ENCODE measurements at regions of chr12 and their contacts with region 1.

Region 1: GRCh38 chr12:9741726-9742125 is 8.8 kb upstream of the CLECL1 start:
- DNase-seq: peak; percentile 92
- ATAC-seq: peak; percentile 79
- H3K4me3 Mint-ChIP-seq: peak overlapping the region; percentile 79
- H3K27ac Mint-ChIP-seq: peak overlapping the region; percentile 96
- H3K4me1 Mint-ChIP-seq: peaks cover 68% of the 10 kb centered on the region
- H3K27me3 Mint-ChIP-seq: no peaks in the 10 kb centered on the region

Region 2: DNA sequence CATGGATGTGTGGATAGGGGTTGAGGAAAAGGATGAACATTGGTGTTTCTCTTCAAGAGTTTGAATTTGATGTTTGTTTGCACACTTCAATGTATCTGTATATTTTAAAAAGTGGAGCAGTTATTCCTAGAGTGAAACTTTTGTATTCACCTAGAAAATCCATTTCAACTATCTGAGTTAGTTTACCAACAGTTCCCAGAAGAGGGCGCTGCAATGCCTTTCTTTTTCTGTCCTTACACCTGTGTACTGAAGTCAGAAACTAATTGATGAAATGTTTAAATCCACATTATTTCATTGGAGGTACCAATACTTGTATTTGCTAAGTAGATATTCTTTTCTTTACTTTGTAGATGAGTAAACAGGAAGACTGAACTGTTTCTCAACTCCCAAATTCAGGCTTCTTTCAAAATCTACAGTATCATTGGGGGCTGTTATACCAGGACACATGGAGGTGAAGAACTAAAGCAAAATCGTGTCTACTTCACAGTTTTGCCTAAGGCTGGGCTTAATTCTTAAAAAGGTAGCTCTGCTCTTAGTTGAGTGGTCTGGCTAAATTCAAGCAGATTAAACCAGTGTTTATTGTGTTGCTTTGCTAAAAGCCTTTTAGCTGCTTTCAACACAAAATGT is 107.4 kb before region 1 on chr12:
- CTCF ChIA-PET with region 1: interaction called, 22 read pairs
- POLR2A ChIA-PET with region 1: no interaction called
- DNase-seq: peak; percentile 91
- ATAC-seq: peak; percentile 88
- H3K4me3 Mint-ChIP-seq: no peak overlapping the region
- H3K27ac Mint-ChIP-seq: peak overlapping the region; percentile 62
- H3K4me1 Mint-ChIP-seq: peaks cover 62% of the 10 kb centered on the region
- H3K27me3 Mint-ChIP-seq: no peaks in the 10 kb centered on the region

Region 3: GRCh38 chr12:9673404-9674225 is 68.1 kb before region 1 on chr12:
- CTCF ChIA-PET with region 1: interaction called, 14 read pairs
- POLR2A ChIA-PET with region 1: interaction called, 24 read pairs
- DNase-seq: peak; percentile 81
- ATAC-seq: peak; percentile 29
- H3K4me3 Mint-ChIP-seq: peak overlapping the region; percentile 86
- H3K27ac Mint-ChIP-seq: peak overlapping the region; percentile 97
- H3K4me1 Mint-ChIP-seq: peaks cover 56% of the 10 kb centered on the region
- H3K27me3 Mint-ChIP-seq: no peaks in the 10 kb centered on the region

Region 4: GRCh38 chr12:9721394-9722092 is 20.2 kb before region 1 on chr12:
- CTCF ChIA-PET with region 1: interaction called, 10 read pairs
- POLR2A ChIA-PET with region 1: interaction called, 4 read pairs
- DNase-seq: no peak
- ATAC-seq: no peak
- H3K4me3 Mint-ChIP-seq: no peak overlapping the region
- H3K27ac Mint-ChIP-seq: no peak overlapping the region
- H3K4me1 Mint-ChIP-seq: peaks cover 26% of the 10 kb centered on the region
- H3K27me3 Mint-ChIP-seq: no peaks in the 10 kb centered on the region

Region 5: GRCh38 chr12:9776778-9777177 is 35.1 kb after region 1 on chr12:
- CTCF ChIA-PET with region 1: no interaction called
- POLR2A ChIA-PET with region 1: no interaction called
- DNase-seq: no peak
- ATAC-seq: no peak
- H3K4me3 Mint-ChIP-seq: no peak overlapping the region
- H3K27ac Mint-ChIP-seq: no peak overlapping the region
- H3K4me1 Mint-ChIP-seq: peaks cover 94% of the 10 kb centered on the region
- H3K27me3 Mint-ChIP-seq: no peaks in the 10 kb centered on the region

Region 6: GRCh38 chr12:9797722-9798619 is 56.2 kb after region 1 on chr12:
- CTCF ChIA-PET with region 1: interaction called, 855 read pairs
- POLR2A ChIA-PET with region 1: interaction called, 13 read pairs
- DNase-seq: peak; percentile 87
- ATAC-seq: peak; percentile 83
- H3K4me3 Mint-ChIP-seq: no peak overlapping the region
- H3K27ac Mint-ChIP-seq: peak overlapping the region; percentile 64
- H3K4me1 Mint-ChIP-seq: peaks cover 46% of the 10 kb centered on the region
- H3K27me3 Mint-ChIP-seq: peaks cover 4% of the 10 kb centered on the region

Region 7: GRCh38 chr12:9906873-9907272 is 165.1 kb after region 1 on chr12:
- CTCF ChIA-PET with region 1: interaction called, 13 read pairs
- POLR2A ChIA-PET with region 1: no interaction called
- DNase-seq: peak; percentile 70
- ATAC-seq: peak; percentile 97
- H3K4me3 Mint-ChIP-seq: peak overlapping the region; percentile 55
- H3K27ac Mint-ChIP-seq: peak overlapping the region; percentile 89
- H3K4me1 Mint-ChIP-seq: peaks cover 52% of the 10 kb centered on the region
- H3K27me3 Mint-ChIP-seq: no peaks in the 10 kb centered on the region

Region 8: GRCh38 chr12:10140001-10140400 is 398.3 kb after region 1 on chr12:
- CTCF ChIA-PET with region 1: interaction called, 11 read pairs
- POLR2A ChIA-PET with region 1: no interaction called
- DNase-seq: peak; percentile 72
- ATAC-seq: peak; percentile 64
- H3K4me3 Mint-ChIP-seq: no peak overlapping the region
- H3K27ac Mint-ChIP-seq: no peak overlapping the region
- H3K4me1 Mint-ChIP-seq: peaks cover 3% of the 10 kb centered on the region
- H3K27me3 Mint-ChIP-seq: peaks cover 16% of the 10 kb centered on the region